Activated CD4-positive, alpha-beta memory T cell treated with anti-CD3 and anti-CD28 coated beads for 36 hours (primary cell): ENCODE measurements at regions of chr5 and their contacts with region 1.

Region 1: DNA sequence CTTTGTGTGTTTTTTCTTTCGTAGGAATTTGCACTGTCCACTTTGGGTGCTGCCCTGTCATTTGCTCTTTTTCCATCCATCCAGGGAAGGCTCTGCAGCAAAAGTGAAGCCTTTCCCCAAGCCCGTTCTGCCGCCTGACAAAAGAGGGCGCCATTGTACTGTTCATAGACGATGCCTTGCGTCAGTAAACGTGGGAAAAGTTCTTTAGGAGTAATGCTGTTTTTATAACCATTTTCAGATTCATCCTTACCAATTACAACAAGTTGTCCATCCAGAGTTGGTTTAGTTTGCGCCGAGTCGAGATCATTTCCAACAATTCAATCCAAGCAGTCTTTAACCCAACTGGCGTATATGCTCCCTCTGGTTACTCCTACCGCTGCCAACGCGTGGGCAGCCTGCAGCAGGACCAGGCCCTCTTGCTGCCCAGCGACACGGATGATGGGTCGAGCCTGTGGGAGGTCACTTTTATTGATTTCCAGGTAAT is 34.3 kb upstream of the RPS23 start:
- DNase-seq: peak; percentile 63
- H3K4me3 Mint-ChIP-seq: no peak overlapping the region
- H3K27ac Mint-ChIP-seq: no peak overlapping the region
- H3K4me1 Mint-ChIP-seq: no peaks in the 10 kb centered on the region
- H3K27me3 Mint-ChIP-seq: peaks cover 1% of the 10 kb centered on the region

Region 2: GRCh38 chr5:82522897-82523296 is 210.5 kb after region 1 on chr5:
- CTCF ChIA-PET with region 1: no interaction called
- POLR2A ChIA-PET with region 1: no interaction called
- intact Hi-C with region 1: no loop called
- DNase-seq: no peak
- H3K4me3 Mint-ChIP-seq: no peak overlapping the region
- H3K27ac Mint-ChIP-seq: no peak overlapping the region
- H3K4me1 Mint-ChIP-seq: peaks cover 10% of the 10 kb centered on the region
- H3K27me3 Mint-ChIP-seq: peaks cover 4% of the 10 kb centered on the region

Region 3: DNA sequence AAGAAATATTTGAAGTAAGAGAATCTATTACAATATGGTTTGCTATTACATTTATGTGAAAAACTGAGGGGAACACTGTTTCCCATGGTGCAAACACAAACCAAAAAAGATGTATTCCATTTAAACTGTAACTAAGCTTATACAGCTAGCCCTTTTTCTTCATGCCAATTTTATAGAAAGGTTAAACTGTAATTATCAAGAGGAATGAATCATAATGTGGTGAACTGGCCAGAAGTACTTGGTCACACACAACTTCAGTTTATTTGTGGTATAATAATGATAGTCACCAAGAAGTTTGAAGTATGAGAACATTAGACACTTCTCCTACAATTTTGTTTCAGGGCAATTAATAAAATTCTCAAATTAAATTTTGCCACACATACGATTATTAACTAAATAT is 942.9 kb after region 1 on chr5:
- CTCF ChIA-PET with region 1: no interaction called
- POLR2A ChIA-PET with region 1: no interaction called
- intact Hi-C with region 1: no loop called
- DNase-seq: no peak
- H3K4me3 Mint-ChIP-seq: no peak overlapping the region
- H3K27ac Mint-ChIP-seq: no peak overlapping the region
- H3K4me1 Mint-ChIP-seq: no peaks in the 10 kb centered on the region
- H3K27me3 Mint-ChIP-seq: no peaks in the 10 kb centered on the region

Region 4: GRCh38 chr5:83564069-83564749 is 1251.8 kb after region 1 on chr5:
- CTCF ChIA-PET with region 1: interaction called, 7 read pairs
- POLR2A ChIA-PET with region 1: no interaction called
- intact Hi-C with region 1: loop called (anchors 10 kb)
- DNase-seq: no peak
- H3K4me3 Mint-ChIP-seq: no peak overlapping the region
- H3K27ac Mint-ChIP-seq: no peak overlapping the region
- H3K4me1 Mint-ChIP-seq: no peaks in the 10 kb centered on the region
- H3K27me3 Mint-ChIP-seq: peaks cover 29% of the 10 kb centered on the region